Activated B cell treated with CpG ODN at 0.5 μM for 24 hours (primary cell): ENCODE measurements at regions of chr19 and their contacts with region 1.

Region 1: GRCh38 chr19:12974301-12975220 is 5.2 kb downstream of the DAND5 start:
- DNase-seq: no peak
- ATAC-seq: no peak
- H3K4me3 Mint-ChIP-seq: no peak overlapping the region
- H3K27ac Mint-ChIP-seq: no peak overlapping the region
- H3K4me1 Mint-ChIP-seq: peaks cover 6% of the 10 kb centered on the region
- H3K27me3 Mint-ChIP-seq: peaks cover 7% of the 10 kb centered on the region
- CTCF ChIP-seq: no peak

Region 2: GRCh38 chr19:13033819-13034611 is 59.5 kb after region 1 on chr19:
- CTCF ChIA-PET with region 1: interaction called, 11 read pairs
- POLR2A ChIA-PET with region 1: no interaction called
- intact Hi-C with region 1: no loop called
- DNase-seq: no peak
- ATAC-seq: peak; percentile 88
- H3K4me3 Mint-ChIP-seq: no peak overlapping the region
- H3K27ac Mint-ChIP-seq: no peak overlapping the region
- H3K4me1 Mint-ChIP-seq: no peaks in the 10 kb centered on the region
- H3K27me3 Mint-ChIP-seq: peaks cover 14% of the 10 kb centered on the region
- CTCF ChIP-seq: no peak